ENCODE measurements at regions of chr3 and their contacts with region 1.

Region 1: GRCh38 chr3:141105828-141106628 is 54.9 kb downstream of the SPSB4 start:
- DNase-seq: peak in 1 of 2 donors; percentile 82
- ATAC-seq: peak in 5 of 8 donors; percentile 12 to 52 (median 26)
- H3K4me3 ChIP-seq: no peak overlapping the region
- H3K27ac ChIP-seq: no peak overlapping the region
- H3K4me1 ChIP-seq: peaks cover 0 to 31% (median 11%) of the 10 kb centered on the region in 9 donors
- H3K27me3 ChIP-seq: no peaks in the 10 kb centered on the region
- CTCF ChIP-seq: peak; percentile 50 to 84 (median 81)

Region 2: GRCh38 chr3:140910860-140911259 is 195.2 kb before region 1 on chr3:
- intact Hi-C with region 1: loop called in 3 of 10 experiments (anchors 10 kb)
- DNase-seq: no peak
- ATAC-seq: peak in 4 of 8 donors; percentile 30 to 51 (median 40)
- H3K4me3 ChIP-seq: peak overlapping the region in 4 of 10 donors; percentile 20 to 29 (median 24)
- H3K27ac ChIP-seq: no peak overlapping the region
- H3K4me1 ChIP-seq: no peaks in the 10 kb centered on the region
- H3K27me3 ChIP-seq: no peaks in the 10 kb centered on the region
- CTCF ChIP-seq: peak in 2 of 9 donors; percentile 15 to 17

Region 3: DNA sequence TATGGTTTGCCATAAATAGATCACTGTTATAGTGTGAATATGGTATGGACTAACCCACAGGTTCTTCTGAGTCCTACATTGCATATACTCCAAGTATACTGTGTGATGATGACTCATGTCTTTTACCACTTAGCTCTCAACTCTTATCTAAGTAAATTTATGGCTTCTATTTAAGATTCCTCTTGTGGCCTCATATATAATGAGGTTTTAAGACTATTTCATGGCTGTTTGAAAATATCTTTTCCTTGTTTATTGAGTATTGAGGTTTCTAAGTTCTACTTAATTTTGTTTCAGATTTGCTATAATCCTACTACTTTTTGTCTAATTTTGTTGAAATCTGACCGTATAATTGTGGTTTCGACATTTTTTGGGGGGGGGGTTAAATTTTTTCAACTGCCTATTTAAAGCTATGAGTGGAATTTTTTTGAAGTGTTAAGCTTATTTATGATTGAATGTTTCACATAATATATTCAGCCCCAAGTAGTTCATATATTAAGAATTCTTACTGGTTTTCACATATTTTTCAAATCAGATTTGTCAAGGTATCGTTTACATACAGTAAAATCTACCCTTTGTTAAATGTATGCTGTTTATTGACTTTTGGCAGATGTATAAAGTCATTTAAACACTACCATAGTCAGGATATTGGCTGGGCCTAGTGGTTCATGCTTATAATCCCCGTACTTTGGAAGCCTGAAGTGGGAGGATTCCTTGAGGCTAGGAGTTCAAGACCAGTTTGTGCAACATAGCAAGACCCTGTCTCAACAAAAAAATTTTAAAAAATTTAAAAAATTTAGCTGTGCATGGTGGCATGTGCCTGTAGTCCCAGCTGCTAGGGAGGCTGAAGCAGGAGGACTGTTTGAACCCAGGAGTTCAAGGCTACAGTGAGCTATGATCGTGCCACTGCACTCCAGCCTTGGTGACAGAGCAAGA is 152.7 kb before region 1 on chr3:
- intact Hi-C with region 1: no loop called
- DNase-seq: no peak
- ATAC-seq: no peak
- H3K4me3 ChIP-seq: no peak overlapping the region
- H3K27ac ChIP-seq: peak overlapping the region in 2 of 10 donors; percentile 16 to 23
- H3K4me1 ChIP-seq: peaks cover 0 to 93% (median 67%) of the 10 kb centered on the region in 9 donors
- H3K27me3 ChIP-seq: no peaks in the 10 kb centered on the region
- CTCF ChIP-seq: no peak

Region 4: GRCh38 chr3:141011232-141011996 is 94.6 kb before region 1 on chr3:
- intact Hi-C with region 1: loop called in 8 of 10 experiments (anchors 1 to 5 kb)
- DNase-seq: peak; percentile 78 to 85
- ATAC-seq: peak; percentile 62 to 84 (median 78)
- H3K4me3 ChIP-seq: no peak overlapping the region
- H3K27ac ChIP-seq: no peak overlapping the region
- H3K4me1 ChIP-seq: peaks cover 0 to 11% (median 5%) of the 10 kb centered on the region in 9 donors
- H3K27me3 ChIP-seq: peaks cover 0 to 12% (median 5%) of the 10 kb centered on the region in 7 donors
- CTCF ChIP-seq: peak; percentile 58 to 89 (median 84)

Region 5: DNA sequence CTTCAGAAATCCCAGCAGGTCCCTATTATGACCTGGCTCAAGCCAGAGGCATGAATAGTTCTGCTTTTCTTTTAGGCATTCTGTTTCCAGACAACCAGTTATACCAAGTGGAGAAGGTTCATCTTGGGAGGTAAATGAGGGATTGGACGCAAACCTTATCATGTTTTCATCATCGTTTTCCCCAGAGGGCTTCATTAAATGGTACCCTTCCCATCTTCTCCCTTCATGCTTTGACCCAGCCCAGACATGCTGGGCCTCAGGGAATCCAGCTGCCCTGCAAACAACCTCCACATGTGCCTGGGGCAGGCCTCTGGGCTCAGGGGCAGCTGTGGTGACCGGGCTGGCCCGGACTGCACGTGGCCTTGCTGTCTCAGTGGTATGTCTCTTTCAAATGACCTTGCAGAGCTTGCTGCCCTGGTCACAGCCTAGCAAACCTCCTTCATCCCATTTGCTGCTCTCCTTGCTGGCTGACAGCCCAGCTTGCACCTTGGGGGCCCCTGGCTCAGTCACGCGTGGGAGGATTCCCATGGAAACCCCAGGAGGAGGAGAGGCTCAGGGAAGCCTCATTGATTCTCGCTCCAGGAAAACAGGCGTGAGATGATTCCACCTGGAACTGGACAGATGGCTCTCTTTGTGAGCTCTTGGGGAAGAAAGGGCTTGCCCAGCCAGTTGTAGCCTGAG is 49.4 kb before region 1 on chr3:
- intact Hi-C with region 1: loop called in 7 of 10 experiments (anchors 2 to 5 kb)
- DNase-seq: peak in 1 of 2 donors; percentile 25
- ATAC-seq: peak in 7 of 8 donors; percentile 9 to 53 (median 37)
- H3K4me3 ChIP-seq: no peak overlapping the region
- H3K27ac ChIP-seq: no peak overlapping the region
- H3K4me1 ChIP-seq: peaks cover 5 to 37% (median 12%) of the 10 kb centered on the region in 9 donors
- H3K27me3 ChIP-seq: peaks cover 0 to 31% (median 13%) of the 10 kb centered on the region in 7 donors
- CTCF ChIP-seq: no peak

Region 6: GRCh38 chr3:141201122-141201521 is 95.1 kb after region 1 on chr3:
- intact Hi-C with region 1: no loop called
- DNase-seq: no peak
- ATAC-seq: no peak
- H3K4me3 ChIP-seq: no peak overlapping the region
- H3K27ac ChIP-seq: no peak overlapping the region
- H3K4me1 ChIP-seq: no peaks in the 10 kb centered on the region
- H3K27me3 ChIP-seq: peaks cover 0 to 8% (median 0%) of the 10 kb centered on the region in 7 donors
- CTCF ChIP-seq: no peak

Region 7: DNA sequence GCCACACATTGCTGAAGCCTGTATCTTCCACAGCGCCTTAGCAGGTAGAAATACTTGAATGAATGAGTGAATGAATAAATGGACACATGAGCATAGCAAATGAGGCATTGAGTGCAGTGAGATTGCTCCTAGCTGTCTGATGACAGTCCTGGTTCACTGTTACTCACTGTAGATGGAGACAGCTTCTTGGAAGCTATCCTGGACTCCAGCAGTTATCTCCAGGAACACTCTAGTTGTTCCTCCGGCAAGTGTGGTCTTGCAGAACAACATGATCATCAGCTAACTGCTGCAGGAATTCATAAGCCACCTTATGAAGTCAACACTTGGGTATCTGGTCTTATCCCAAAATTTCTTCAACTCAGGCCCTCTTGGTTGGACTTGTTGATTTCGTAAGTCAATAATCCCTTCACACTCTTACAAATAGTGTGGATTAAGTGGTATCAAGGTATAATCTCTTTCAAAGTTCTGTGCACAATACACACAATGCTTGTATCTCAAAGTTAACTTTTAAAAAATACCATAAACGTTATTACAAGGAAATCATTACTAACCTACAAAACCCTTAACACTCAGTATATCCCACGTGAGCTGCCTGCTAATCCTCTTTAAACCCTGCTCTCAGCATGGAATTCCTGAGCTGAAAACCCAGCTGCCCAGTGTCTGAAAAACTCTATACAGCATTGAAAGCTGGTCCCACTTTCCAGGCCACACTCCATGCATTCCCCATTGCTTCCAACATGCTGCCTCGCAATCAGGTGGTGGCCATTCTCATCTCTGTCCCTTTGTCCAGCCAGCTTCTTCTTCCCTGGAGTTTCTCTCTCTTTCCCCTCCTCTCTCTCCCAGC is 247.8 kb after region 1 on chr3:
- intact Hi-C with region 1: no loop called
- DNase-seq: no peak
- ATAC-seq: peak in 4 of 8 donors; percentile 27 to 88 (median 66)
- H3K4me3 ChIP-seq: no peak overlapping the region
- H3K27ac ChIP-seq: no peak overlapping the region
- H3K4me1 ChIP-seq: no peaks in the 10 kb centered on the region
- H3K27me3 ChIP-seq: no peaks in the 10 kb centered on the region
- CTCF ChIP-seq: no peak

Measured in heart right ventricle (tissue), 16 donors.